SK-N-SH (cell line): ENCODE measurements at regions of chr6 and their contacts with region 1.

Region 1: GRCh38 chr6:109783250-109783986 is 92.3 kb downstream of the FIG4 start:
- DNase-seq: no peak
- H3K4me3 ChIP-seq: no peak overlapping the region; a peak in 1 of 4 replicates
- H3K27ac ChIP-seq: no peak overlapping the region
- H3K4me1 ChIP-seq: peaks cover 0 to 16% of the 10 kb centered on the region in 2 experiments; a peak in 2 of 4 replicates
- H3K27me3 ChIP-seq: no peaks in the 10 kb centered on the region
- CTCF ChIP-seq: peak; percentile 40
- EP300 ChIP-seq: no peak
- RAD21 ChIP-seq: peak; percentile 27; the same call in 1 of the 2 replicates

Region 2: DNA sequence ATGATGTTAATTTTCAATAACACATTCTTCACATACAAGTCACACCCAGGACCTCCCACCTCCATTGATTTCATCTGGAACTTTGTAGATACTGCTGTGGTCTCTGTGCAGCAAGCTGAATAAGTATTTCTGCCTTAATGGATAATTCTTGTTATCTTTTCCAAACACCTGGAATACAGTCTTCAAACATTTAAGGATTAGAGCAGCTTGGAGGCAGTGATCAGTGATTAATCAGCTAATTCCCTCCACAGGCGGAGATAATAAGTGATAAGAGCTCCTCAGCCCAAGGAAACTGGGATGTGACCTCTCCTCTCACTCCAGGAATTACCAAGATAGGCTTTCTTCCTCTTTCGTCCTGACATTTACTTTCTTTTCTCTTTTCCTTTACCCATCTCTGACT is 18.4 kb after region 1 on chr6:
- CTCF ChIA-PET with region 1: interaction called, 12 read pairs
- POLR2A ChIA-PET with region 1: no interaction called
- DNase-seq: no peak
- H3K4me3 ChIP-seq: no peak overlapping the region
- H3K27ac ChIP-seq: no peak overlapping the region
- H3K4me1 ChIP-seq: no peaks in the 10 kb centered on the region
- H3K27me3 ChIP-seq: no peaks in the 10 kb centered on the region
- CTCF ChIP-seq: no peak
- EP300 ChIP-seq: no peak
- RAD21 ChIP-seq: no peak

Region 3: DNA sequence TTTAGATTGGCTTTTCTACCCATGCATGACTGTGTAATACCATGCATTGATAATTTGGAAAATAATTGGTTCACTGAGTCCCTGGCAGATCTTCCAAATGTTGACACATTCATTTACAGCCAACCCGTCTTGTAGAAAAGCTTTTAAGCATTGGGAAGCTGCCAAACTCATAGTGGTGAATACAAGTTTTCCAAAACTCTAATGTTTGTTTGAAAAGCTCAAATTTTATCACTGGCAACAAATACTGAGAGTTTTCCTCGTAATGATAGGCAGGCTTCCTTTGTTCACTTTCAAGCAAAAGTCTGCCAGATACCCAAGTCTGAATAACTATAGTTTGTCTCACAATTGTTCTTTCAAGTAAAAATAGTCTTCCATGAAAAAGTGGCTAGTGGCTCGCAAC is 50.7 kb after region 1 on chr6:
- CTCF ChIA-PET with region 1: no interaction called
- POLR2A ChIA-PET with region 1: no interaction called
- DNase-seq: no peak
- H3K4me3 ChIP-seq: no peak overlapping the region
- H3K27ac ChIP-seq: no peak overlapping the region
- H3K4me1 ChIP-seq: peaks cover 0 to 16% of the 10 kb centered on the region in 2 experiments; a peak in 2 of 4 replicates
- H3K27me3 ChIP-seq: no peaks in the 10 kb centered on the region
- CTCF ChIP-seq: no peak
- EP300 ChIP-seq: no peak
- RAD21 ChIP-seq: no peak